GM12878 (cell line): ENCODE measurements at regions of chr19 and their contacts with region 1.

Region 1: DNA sequence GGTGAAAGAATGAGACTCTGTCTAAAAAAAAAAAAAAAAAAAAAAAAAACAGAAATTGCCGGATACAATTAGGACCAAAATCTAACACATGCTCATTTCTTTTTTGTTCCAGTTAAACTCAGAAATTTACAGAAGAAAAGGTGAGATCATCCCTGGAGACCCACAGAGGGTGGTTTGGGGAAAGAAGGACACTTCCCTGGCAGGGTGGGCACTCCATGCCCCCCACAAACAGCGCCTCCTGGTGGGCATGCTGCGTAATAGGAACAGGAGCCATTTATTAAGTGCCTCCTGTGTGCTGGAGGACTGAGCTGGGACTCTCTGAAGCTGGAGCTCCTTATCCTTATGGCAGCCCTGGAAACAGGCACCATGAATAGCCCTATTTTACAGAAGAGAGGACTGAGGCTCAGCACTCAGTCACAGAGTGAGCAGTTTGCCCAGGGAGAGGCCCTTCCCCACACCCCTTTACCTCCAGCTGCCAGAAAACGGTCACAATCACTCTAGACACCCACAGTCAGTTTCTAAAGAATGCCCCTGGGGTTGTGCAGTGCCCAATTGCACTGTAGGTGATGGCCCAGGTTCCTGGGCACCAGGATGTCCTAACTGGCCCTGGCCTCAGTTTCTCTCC is 10.1 kb downstream of the C19orf38 start:
- DNase-seq: no peak
- ATAC-seq: peak; percentile 73
- H3K4me3 ChIP-seq: no peak overlapping the region
- H3K27ac ChIP-seq: no peak overlapping the region
- H3K4me1 ChIP-seq: no peaks in the 10 kb centered on the region; the same call in 1 of the 2 replicates
- H3K27me3 ChIP-seq: no peaks in the 10 kb centered on the region
- CTCF ChIP-seq: peak; percentile 65 to 91 (median 80)
- EP300 ChIP-seq: no peak
- POLR2A ChIP-seq: no peak
- RAD21 ChIP-seq: peak; percentile 49; the same call in 1 of the 2 replicates

Region 2: GRCh38 chr19:10701955-10702525 is 156.3 kb before region 1 on chr19:
- CTCF ChIA-PET with region 1: interaction called, 66 read pairs
- POLR2A ChIA-PET with region 1: interaction called, 5 read pairs
- RAD21 ChIA-PET with region 1: interaction called, 38 read pairs
- SMC1A ChIA-PET with region 1: interaction called, 17 read pairs
- in situ Hi-C with region 1: no loop called
- intact Hi-C with region 1: no loop called
- DNase-seq: no peak
- ATAC-seq: peak; percentile 62
- H3K4me3 ChIP-seq: peak overlapping the region; percentile 87
- H3K27ac ChIP-seq: peak overlapping the region; percentile 73
- H3K4me1 ChIP-seq: no peaks in the 10 kb centered on the region
- H3K27me3 ChIP-seq: no peaks in the 10 kb centered on the region
- CTCF ChIP-seq: peak in 2 of 3 experiments; percentile 28 to 41; a peak in 2 of 6 replicates
- EP300 ChIP-seq: no peak
- POLR2A ChIP-seq: no peak
- RAD21 ChIP-seq: peak; percentile 13; the same call in 1 of the 2 replicates

Region 3: DNA sequence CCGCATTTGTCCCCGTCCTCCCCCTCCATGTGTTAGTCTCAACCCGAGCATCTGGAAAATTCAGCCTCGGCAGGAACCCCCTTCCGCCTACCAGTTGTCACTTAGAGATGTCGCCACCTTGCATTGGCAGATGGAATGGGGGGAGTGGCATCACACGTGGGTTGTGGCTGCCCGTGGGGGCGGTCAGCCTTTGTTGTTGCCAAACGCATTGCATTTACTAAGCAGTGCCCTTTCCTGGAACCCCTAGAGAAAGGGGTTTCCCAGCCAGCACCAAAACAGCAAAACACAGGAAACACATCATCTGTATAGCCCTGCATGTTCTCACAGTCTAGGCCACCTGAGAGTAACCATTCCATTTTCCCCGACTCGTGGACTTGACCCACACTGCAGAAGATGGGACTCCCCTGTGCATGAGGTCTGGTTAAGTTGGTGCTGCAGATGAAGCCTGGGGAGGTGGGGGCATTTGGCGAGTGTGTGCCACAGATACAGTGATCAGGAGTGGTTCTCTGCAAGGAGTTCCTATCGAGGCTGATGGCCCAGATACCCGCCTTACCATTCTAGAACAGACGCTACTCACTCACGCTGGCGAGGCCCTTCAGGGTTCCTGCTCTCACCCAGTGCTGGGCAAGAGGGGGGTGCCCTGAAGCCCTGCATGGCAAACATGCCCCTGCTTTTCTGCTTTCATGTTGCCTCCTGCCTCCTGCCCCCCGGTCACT is 60.6 kb before region 1 on chr19:
- CTCF ChIA-PET with region 1: no interaction called
- POLR2A ChIA-PET with region 1: interaction called, 11 read pairs
- RAD21 ChIA-PET with region 1: no interaction called
- SMC1A ChIA-PET with region 1: no interaction called
- in situ Hi-C with region 1: no loop called
- intact Hi-C with region 1: no loop called
- DNase-seq: peak; percentile 74
- ATAC-seq: peak; percentile 95
- H3K4me3 ChIP-seq: no peak overlapping the region
- H3K27ac ChIP-seq: peak overlapping the region; percentile 46; the same call in 1 of the 2 replicates
- H3K4me1 ChIP-seq: peaks cover 3% of the 10 kb centered on the region
- H3K27me3 ChIP-seq: no peaks in the 10 kb centered on the region
- CTCF ChIP-seq: no peak
- EP300 ChIP-seq: peak; percentile 25 to 49; a peak in 2 of 4 replicates
- POLR2A ChIP-seq: no peak
- RAD21 ChIP-seq: no peak

Region 4: DNA sequence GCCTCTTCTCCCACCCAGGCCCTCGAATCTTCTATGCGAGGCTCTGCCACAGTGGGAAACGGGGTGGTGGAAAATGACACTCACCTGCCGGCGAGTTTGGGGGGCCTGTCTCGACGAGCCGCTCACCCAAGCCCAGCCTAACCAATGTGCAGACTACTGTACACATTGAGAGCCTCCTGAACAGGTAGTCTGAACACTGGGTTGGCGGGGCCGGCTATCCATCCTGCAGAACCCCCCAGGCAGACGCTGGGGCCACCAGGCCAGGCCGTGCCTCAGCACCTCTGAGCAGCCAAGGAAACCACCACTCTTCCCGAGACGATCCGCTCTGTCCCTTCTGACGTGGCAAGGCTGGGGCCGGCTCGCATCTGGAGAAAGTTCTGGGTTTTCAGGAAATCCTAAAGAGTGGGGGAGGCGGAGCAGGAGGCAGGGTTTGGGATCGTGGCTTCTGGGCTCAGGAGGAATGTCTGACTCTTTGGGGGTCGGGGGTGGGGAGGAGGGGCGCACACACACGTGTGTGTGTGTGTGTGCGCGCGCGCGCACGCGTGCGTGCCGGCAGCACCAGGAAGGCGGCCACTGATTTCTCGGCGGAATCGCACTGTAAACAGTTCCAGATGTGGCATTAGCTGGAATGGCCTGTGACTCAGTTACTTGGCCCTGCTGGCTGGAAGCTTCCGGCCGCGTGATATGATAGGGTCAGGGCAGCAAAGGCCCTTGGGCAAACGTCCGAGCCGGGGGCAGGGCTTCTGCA is 40.9 kb before region 1 on chr19:
- CTCF ChIA-PET with region 1: no interaction called
- POLR2A ChIA-PET with region 1: no interaction called
- RAD21 ChIA-PET with region 1: no interaction called
- SMC1A ChIA-PET with region 1: no interaction called
- in situ Hi-C with region 1: no loop called
- intact Hi-C with region 1: no loop called
- DNase-seq: no peak
- ATAC-seq: no peak
- H3K4me3 ChIP-seq: no peak overlapping the region
- H3K27ac ChIP-seq: no peak overlapping the region
- H3K4me1 ChIP-seq: no peaks in the 10 kb centered on the region
- H3K27me3 ChIP-seq: no peaks in the 10 kb centered on the region
- CTCF ChIP-seq: no peak
- EP300 ChIP-seq: no peak
- POLR2A ChIP-seq: no peak
- RAD21 ChIP-seq: no peak

Region 5: GRCh38 chr19:10835754-10836477 is 22.4 kb before region 1 on chr19 and contains the start of gene TMED1:
- CTCF ChIA-PET with region 1: interaction called, 68 read pairs
- POLR2A ChIA-PET with region 1: interaction called, 6 read pairs
- RAD21 ChIA-PET with region 1: interaction called, 32 read pairs
- SMC1A ChIA-PET with region 1: interaction called, 24 read pairs
- in situ Hi-C with region 1: no loop called
- intact Hi-C with region 1: no loop called
- DNase-seq: peak; percentile 91
- ATAC-seq: peak; percentile 98
- H3K4me3 ChIP-seq: peak within 1 kb of the TSS; percentile 78
- H3K27ac ChIP-seq: peak within 1 kb of the TSS; percentile 89
- H3K4me1 ChIP-seq: peaks cover 12% of the 10 kb centered on the region
- H3K27me3 ChIP-seq: no peaks in the 10 kb centered on the region
- CTCF ChIP-seq: peak in 1 of 3 experiments; percentile 42; a peak in 1 of 6 replicates
- EP300 ChIP-seq: no peak
- POLR2A ChIP-seq: peak; percentile 86
- RAD21 ChIP-seq: no peak
- polyA plus RNA-seq, gene TMED1: 0.60 to 2.8 TPM

Region 6: GRCh38 chr19:10870955-10871603 is 12.8 kb after region 1 on chr19 and contains the start of gene CARM1:
- CTCF ChIA-PET with region 1: interaction called, 24 read pairs
- POLR2A ChIA-PET with region 1: interaction called, 5 read pairs
- RAD21 ChIA-PET with region 1: interaction called, 8 read pairs
- SMC1A ChIA-PET with region 1: interaction called, 14 read pairs
- in situ Hi-C with region 1: no loop called
- intact Hi-C with region 1: no loop called
- DNase-seq: peak; percentile 79
- ATAC-seq: peak; percentile 84
- H3K4me3 ChIP-seq: peak within 1 kb of the TSS; percentile 68
- H3K27ac ChIP-seq: peak within 1 kb of the TSS; percentile 90
- H3K4me1 ChIP-seq: peaks cover 33% of the 10 kb centered on the region
- H3K27me3 ChIP-seq: no peaks in the 10 kb centered on the region
- CTCF ChIP-seq: peak; percentile 55 to 90 (median 66)
- EP300 ChIP-seq: no peak
- POLR2A ChIP-seq: no peak
- RAD21 ChIP-seq: peak; percentile 72
- polyA plus RNA-seq, gene CARM1: 0.45 to 0.49 TPM